HEK293 (cell line): ENCODE measurements at regions of chr4 and their contacts with region 1.

Region 1: DNA sequence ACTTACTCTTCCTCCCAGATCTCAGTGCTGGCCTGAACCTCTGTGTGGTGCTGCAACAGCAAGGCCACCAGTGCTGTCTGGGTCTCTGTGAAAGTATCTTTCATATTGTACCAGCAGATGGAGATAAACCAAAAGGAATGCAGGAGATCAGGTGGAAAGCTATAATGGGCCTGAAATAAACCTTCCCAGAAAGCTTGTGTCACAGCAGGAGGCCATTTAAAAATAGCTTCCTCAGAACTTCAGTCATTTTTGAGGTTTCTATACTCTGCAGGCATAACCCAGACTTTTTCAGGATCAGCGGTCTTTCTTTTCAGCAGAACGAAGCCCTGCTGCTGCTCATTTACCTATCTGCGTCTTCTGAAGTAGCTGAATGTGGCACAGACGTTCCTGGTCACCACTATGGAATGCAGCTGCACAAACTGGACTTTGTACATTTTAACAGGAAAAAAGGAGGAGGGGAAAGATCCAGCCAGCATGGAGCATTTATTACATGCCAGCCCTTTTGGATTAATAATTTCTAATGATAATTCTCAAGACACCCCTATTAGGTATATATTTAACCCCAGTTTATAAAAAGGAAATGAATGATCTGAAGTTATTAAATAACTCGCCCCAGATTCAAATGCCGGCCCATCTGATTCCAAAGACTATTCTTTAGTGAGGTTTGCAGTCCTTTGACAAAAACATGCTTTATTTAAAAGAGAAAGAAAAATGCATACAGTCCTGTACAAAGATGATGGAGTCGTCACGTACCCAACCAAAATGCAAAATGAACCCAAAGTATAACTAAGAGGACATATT is 119.7 kb downstream of the NFKB1 start:
- H3K4me3 ChIP-seq: peak overlapping the region; percentile 9; the same call in 1 of the 2 replicates
- H3K27ac ChIP-seq: no peak overlapping the region
- H3K4me1 ChIP-seq: no peaks in the 10 kb centered on the region
- CTCF ChIP-seq: peak; percentile 69; the same call in 1 of the 2 replicates

Region 2: DNA sequence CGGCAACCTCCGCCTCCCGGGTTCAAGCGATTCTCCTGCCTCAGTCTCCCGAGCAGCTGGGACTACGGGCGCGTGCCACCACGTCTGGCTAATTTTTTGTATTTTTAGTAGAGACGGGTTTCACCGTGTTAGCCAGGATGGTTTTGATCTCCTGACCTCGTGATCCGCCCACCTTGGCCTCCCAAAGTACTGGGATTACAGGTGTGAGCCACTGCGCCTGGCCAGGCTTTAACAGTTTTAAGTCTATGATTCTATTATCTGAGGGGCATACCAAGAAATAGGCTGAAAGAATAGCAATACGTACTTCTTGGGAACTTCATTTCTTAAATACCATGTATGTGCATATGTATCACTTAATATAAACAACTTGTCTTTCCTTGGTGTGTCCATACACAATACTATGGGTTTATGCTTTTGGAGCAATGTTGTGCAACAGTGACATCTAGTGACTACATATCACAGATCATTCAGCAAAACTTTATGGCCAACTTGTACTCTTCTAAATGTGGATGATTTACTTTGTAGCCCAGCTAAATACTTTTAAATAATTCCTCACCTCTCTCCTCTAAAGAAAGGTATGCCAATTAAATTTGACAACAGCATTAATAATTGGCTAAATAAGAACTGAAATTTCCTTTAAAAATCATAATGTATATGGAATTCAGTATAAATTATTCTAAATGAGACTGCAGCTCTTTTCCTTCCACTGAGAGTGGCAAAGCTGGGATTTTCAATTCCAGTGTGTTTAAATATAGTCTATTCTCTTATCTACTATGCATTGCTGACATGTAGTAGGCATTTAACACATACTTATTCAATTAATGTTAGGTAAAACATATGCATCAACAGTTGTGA is 388.2 kb after region 1 on chr4:
- CTCF ChIA-PET with region 1: interaction called, 34 read pairs
- POLR2A ChIA-PET with region 1: no interaction called
- H3K4me3 ChIP-seq: no peak overlapping the region
- H3K27ac ChIP-seq: no peak overlapping the region
- H3K4me1 ChIP-seq: peaks cover 6% of the 10 kb centered on the region; the same call in 1 of the 2 replicates
- CTCF ChIP-seq: peak; percentile 54; the same call in 1 of the 2 replicates

Region 3: DNA sequence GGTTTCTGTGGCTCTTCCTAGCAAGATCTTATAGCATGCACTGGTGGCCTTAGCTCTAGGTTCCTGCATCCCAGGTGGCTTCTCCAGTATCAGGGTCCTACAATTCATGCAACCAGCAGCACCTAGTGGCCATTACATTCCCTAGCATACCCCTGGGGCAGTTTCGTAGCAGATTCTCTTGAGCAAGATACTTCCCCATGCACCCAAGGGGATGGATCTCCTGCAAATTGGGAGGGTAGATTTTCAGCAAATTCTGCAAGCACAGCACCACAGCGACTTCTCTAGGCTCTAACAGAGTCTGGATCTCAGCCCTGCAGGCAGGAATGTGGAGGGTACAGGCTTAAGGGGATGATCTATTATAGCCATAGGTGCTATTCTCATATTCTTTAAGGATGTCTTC is 411.7 kb after region 1 on chr4:
- CTCF ChIA-PET with region 1: interaction called, 11 read pairs
- POLR2A ChIA-PET with region 1: no interaction called
- H3K4me3 ChIP-seq: no peak overlapping the region
- H3K27ac ChIP-seq: no peak overlapping the region
- H3K4me1 ChIP-seq: no peaks in the 10 kb centered on the region
- CTCF ChIP-seq: no peak

Region 4: DNA sequence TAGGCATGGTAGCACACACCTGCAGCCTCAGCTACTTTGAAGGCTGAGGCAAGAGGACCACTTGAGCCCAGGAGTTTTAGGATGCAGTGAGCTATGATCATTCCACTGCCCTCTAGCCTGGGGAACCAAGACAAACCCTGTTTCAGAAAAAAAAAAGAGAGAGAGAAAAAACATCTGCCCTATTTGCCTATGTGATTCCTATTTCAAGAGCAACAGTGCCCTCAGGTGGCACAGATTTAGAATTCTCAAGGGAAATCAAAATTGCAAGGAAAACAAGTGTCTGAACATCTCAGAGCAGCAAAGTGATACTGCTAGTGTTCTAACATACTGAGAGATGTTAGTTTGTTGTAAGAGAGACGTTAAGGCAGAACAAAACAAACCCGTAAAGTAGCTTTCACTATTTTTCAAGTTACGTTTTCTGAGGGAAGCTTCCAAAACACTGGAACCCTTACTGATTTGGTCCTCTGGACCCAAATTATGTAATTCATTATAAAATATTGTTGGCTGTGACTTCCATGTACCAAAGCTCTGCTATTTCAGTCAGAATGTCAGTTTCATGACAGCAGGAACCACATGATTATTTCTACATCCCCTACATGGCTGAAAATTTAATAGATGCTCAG is 470.8 kb after region 1 on chr4:
- CTCF ChIA-PET with region 1: interaction called, 21 read pairs
- POLR2A ChIA-PET with region 1: no interaction called
- H3K4me3 ChIP-seq: no peak overlapping the region
- H3K27ac ChIP-seq: no peak overlapping the region
- H3K4me1 ChIP-seq: no peaks in the 10 kb centered on the region
- CTCF ChIP-seq: peak; percentile 66; the same call in 1 of the 2 replicates

Region 5: DNA sequence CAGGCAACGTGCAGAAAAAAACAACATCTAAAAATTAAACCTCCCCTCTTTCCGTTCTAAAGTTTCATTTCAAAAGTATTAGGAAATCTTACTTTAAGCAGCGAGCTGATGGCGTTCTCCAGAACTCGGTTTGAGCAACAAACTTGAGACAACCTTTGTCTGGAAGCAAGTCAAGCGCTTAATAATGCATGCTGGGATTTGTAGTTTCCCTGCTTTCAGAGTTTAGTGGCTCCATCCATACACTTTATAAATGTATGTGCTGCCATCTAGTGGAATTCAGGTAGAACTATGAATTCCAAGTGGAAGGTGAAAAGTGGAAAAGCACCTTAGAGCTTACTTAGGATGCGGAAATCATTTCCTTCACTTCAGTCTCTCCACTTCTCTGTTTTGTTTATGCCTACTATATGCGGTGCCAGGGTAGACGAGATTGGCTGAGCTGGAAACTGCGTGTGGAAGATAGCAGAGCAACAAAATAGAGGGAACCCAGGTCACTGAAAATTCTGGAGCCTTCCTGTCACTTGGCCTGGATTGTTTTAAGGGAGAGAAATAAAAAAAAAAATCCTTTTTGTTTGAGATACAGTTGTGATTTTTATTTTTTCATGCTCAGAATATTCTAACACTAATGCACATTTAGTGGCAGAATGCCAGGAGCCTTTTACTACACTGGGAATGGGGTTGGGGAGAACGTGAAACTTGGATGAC is 478.9 kb after region 1 on chr4 and contains the start of gene BDH2:
- CTCF ChIA-PET with region 1: interaction called, 13 read pairs
- POLR2A ChIA-PET with region 1: no interaction called
- H3K4me3 ChIP-seq: peak within 1 kb of the TSS; percentile 35
- H3K27ac ChIP-seq: no peak within 1 kb of the TSS
- H3K4me1 ChIP-seq: no peaks in the 10 kb centered on the region
- CTCF ChIP-seq: peak; percentile 53; the same call in 1 of the 2 replicates